ENCODE measurements at regions of chr3 and their contacts with region 1.

Region 1: DNA sequence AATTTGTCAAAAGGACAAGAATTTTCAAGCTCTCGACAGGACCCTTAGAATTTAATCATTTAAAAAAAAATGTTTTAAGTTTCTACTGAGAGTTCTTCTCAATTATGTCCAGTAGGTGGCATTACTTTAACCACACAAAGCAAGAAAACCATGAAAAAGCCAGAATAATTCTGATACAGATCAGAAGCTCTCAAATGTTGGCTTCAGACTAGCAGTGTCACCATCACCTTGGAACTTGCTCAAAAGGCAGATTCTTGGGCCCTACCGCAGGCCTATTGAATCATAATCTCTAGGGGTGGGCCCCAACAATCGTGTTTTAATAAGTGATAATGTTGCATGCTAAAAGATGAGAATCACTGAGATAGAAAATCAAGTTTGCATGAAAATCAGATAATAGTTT is 99.5 kb upstream of the KCNMB2 start:
- DNase-seq: no peak
- ATAC-seq: peak; percentile 49

Region 2: DNA sequence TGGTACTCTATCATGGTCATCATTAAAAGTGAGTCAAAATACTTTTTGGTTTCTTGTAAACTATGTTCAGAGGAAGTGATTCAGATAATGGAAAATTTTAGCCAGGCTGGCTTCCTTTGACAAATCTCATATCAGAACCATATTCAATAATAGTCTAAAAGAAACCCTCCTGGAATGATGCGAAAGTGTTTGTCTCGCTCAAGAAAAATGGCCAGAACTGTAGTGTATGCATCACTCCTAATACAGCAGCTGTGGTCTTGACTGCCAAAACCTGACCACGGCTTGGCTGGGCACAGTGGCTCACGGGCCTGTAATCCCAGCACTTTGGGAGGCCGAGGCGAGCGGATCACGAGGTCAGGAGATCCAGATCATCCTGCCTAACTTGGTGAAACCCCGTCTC is 63.9 kb after region 1 on chr3:
- intact Hi-C with region 1: no loop called
- DNase-seq: no peak
- ATAC-seq: no peak

Region 3: GRCh38 chr3:178966299-178967176 is 529.8 kb after region 1 on chr3:
- intact Hi-C with region 1: loop called (anchors 1 kb)
- DNase-seq: no peak
- ATAC-seq: peak; percentile 59